ENCODE measurements at regions of chr7 and their contacts with region 1.

Region 1: GRCh38 chr7:100101016-100101862 is at the starts of genes AP4M1 and MCM7:
- DNase-seq: peak; percentile 94 to 98
- H3K4me3 ChIP-seq: peak within 1 kb of the TSS; percentile 76 to 97 (median 84)
- H3K27ac ChIP-seq: peak within 1 kb of the TSS; percentile 98
- H3K4me1 ChIP-seq: peaks cover 0 to 8% (median 3%) of the 10 kb centered on the region in 4 experiments; a peak in 3 of 7 replicates
- H3K27me3 ChIP-seq: no peaks in the 10 kb centered on the region
- CTCF ChIP-seq: no peak; a peak in 1 of 4 replicates
- EP300 ChIP-seq: no peak
- POLR2A ChIP-seq: peak in 1 of 2 experiments; percentile 77; a peak in 2 of 3 replicates
- RAD21 ChIP-seq: no peak
- total RNA-seq, gene AP4M1: 15.2 and 15.8 TPM in 2 replicates
- total RNA-seq, gene MCM7: 339 and 344 TPM in 2 replicates

Region 2: DNA sequence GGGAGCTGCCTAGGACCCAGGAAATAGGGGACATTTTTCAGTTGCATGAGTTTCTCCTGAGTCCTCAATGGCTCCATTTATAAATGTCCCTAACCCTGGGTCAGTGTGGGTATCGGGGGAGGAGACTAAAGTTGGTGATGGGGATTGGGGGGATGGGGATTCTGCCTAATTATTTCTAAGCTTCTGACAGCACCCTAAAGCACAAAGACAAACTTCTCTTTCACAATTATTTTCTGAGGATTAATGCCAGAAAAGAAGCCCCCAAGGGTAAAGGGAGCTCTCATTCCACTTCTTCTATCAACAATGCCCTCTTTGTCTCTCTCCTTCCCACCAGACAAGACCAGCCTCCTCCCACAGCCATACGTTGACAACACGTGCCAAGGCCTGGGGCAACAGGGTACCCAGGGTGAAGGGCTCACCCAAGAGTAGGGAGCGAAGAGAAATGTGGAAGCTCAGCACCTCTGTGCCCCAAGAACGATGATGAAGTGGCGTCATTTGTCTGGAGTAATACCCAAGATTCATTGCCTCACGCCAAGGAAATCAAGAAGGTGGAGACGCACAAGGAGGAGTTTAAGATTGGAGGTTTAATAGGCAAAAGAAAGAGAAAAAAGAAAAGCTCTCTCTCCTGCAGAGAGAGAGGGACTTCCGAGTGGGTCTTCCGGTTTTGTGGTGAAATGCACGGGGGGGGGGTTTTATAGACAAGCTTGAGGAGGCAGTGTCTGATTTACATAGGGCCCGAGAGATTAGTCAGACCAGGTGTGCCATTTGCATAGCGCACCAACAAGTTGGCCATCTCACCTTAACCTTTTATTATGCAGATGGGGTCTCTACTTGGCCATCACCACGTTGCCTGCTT is 157.4 kb before region 1 on chr7:
- CTCF ChIA-PET with region 1: no interaction called
- POLR2A ChIA-PET with region 1: interaction called, 23 read pairs
- DNase-seq: peak; percentile 62 to 74
- H3K4me3 ChIP-seq: peak overlapping the region in 3 of 4 experiments; percentile 1 to 48 (median 4); a peak in 3 of 8 replicates
- H3K27ac ChIP-seq: peak overlapping the region; percentile 95
- H3K4me1 ChIP-seq: peaks cover 8 to 13% (median 11%) of the 10 kb centered on the region in 4 experiments; a peak in 5 of 7 replicates
- H3K27me3 ChIP-seq: no peaks in the 10 kb centered on the region; a peak in 1 of 7 replicates
- CTCF ChIP-seq: no peak
- EP300 ChIP-seq: peak in 1 of 2 experiments; percentile 90; a peak in 1 of 3 replicates
- POLR2A ChIP-seq: peak; percentile 51 to 59; a peak in 2 of 3 replicates
- RAD21 ChIP-seq: no peak

Region 3: DNA sequence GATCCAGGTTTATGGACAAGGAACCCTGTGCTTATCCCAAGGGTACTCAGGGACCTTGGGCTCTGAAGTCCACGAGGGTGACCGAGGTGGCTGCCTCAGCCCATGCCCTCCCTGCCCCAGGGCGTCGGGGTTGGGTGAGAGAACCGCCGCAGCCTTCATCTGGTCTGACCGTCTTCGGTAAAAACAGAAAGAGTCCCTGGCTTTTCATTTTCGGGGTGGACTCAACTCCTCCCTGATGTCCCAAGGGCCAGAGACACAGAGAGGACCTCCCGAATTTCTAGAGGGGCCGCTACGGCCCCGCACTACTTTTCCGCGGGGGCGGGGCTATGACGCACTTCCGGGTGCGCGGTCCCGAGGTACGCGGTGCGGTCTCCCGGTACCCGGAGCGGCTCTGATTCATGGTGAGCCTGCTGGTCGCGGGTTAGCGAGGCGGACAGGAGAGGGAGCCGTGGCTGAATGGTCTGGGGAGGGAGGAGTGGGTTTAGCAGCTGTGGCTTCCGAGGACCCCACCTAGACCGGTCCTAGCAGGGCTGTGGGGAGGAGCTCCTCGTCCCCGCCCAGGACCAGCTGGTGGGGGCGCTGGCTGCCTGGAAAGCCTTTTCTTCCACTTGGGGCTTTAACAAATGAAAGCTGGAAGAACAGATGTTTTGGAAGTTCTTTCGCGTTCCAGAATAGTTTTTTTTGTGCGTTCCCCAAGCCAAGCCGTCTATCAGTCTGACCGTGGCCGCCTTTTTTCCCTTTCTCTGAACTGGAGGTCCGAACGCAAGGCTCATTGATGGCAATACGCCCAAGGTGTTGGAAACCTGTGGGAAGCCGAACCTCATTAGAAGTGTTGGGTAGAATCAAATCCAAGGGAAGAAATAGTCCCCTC is 51.6 kb before region 1 on chr7 and contains the start of gene ZSCAN21:
- CTCF ChIA-PET with region 1: no interaction called
- POLR2A ChIA-PET with region 1: interaction called, 10 read pairs
- DNase-seq: peak; percentile 34 to 95
- H3K4me3 ChIP-seq: peak within 1 kb of the TSS; percentile 79 to 98 (median 86)
- H3K27ac ChIP-seq: peak within 1 kb of the TSS; percentile 86
- H3K4me1 ChIP-seq: peaks cover 0 to 3% (median 0%) of the 10 kb centered on the region in 4 experiments; a peak in 3 of 7 replicates
- H3K27me3 ChIP-seq: peaks cover 0 to 1% (median 0%) of the 10 kb centered on the region in 4 experiments; a peak in 1 of 7 replicates
- CTCF ChIP-seq: peak in 1 of 3 experiments; percentile 7; a peak in 1 of 4 replicates
- EP300 ChIP-seq: no peak
- POLR2A ChIP-seq: peak; percentile 84 to 94
- RAD21 ChIP-seq: no peak
- total RNA-seq, gene ZSCAN21: 25.4 and 26.1 TPM in 2 replicates

Region 4: DNA sequence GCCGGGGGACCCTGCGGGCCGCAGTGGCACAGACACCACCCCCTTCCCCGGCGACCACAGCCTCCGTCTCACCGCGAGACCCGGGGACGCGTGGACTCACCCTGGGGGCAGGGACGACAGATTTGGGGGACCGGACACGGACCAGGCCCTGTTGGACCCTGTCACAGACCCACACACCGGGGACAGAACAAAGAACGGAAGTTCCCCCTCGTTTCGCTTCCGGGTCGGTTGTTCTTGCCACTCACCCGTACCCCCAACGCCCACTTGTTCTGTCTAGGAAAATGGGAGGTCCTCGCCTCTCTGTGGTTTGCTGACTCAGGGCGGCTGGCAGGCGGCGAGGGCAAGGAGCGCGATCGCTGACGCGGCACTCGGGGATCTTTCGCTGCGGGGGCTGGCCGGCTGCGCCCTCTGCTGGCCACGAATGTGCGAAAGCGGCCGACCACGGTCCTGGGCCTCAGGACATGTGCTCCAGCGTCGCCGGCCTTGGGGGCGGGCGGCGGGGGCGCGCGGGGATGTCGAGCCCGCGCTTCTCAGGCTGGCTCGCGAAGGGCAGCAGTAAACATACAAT is 19.6 kb before region 1 on chr7 and contains the start of gene ZNF3:
- CTCF ChIA-PET with region 1: interaction called, 8 read pairs
- POLR2A ChIA-PET with region 1: interaction called, 722 read pairs
- DNase-seq: peak; percentile 97
- H3K4me3 ChIP-seq: peak within 1 kb of the TSS; percentile 76 to 100 (median 96)
- H3K27ac ChIP-seq: peak within 1 kb of the TSS; percentile 91
- H3K4me1 ChIP-seq: peaks cover 0 to 9% (median 4%) of the 10 kb centered on the region in 4 experiments; a peak in 3 of 7 replicates
- H3K27me3 ChIP-seq: no peaks in the 10 kb centered on the region
- CTCF ChIP-seq: peak; percentile 84 to 94 (median 85)
- EP300 ChIP-seq: peak in 1 of 2 experiments; percentile 81; a peak in 1 of 3 replicates
- POLR2A ChIP-seq: peak; percentile 77 to 95
- RAD21 ChIP-seq: peak; percentile 67 to 71
- total RNA-seq, gene ZNF3: 49.1 and 50.7 TPM in 2 replicates

Region 5: GRCh38 chr7:100126931-100127865 is 26.0 kb after region 1 on chr7 and contains the start of gene MBLAC1:
- CTCF ChIA-PET with region 1: interaction called, 55 read pairs
- POLR2A ChIA-PET with region 1: interaction called, 414 read pairs
- DNase-seq: peak in 1 of 2 experiments; percentile 94
- H3K4me3 ChIP-seq: peak within 1 kb of the TSS; percentile 84 to 90 (median 88)
- H3K27ac ChIP-seq: peak within 1 kb of the TSS; percentile 90
- H3K4me1 ChIP-seq: peaks cover 0 to 8% (median 0%) of the 10 kb centered on the region in 4 experiments; a peak in 1 of 7 replicates
- H3K27me3 ChIP-seq: peaks cover 0 to 11% (median 0%) of the 10 kb centered on the region in 4 experiments; a peak in 2 of 7 replicates
- CTCF ChIP-seq: no peak
- EP300 ChIP-seq: peak in 1 of 2 experiments; percentile 98; a peak in 2 of 3 replicates
- POLR2A ChIP-seq: peak; percentile 0 to 78
- RAD21 ChIP-seq: no peak
- total RNA-seq, gene MBLAC1: 1.7 TPM in 2 replicates

Region 6: GRCh38 chr7:100158229-100159098 is 57.2 kb after region 1 on chr7 and contains the start of gene TRAPPC14:
- CTCF ChIA-PET with region 1: interaction called, 4 read pairs
- POLR2A ChIA-PET with region 1: interaction called, 17 read pairs
- DNase-seq: peak; percentile 83 to 99
- H3K4me3 ChIP-seq: peak within 1 kb of the TSS; percentile 57 to 88 (median 80)
- H3K27ac ChIP-seq: peak within 1 kb of the TSS; percentile 24; the same call in 1 of the 2 replicates
- H3K4me1 ChIP-seq: peaks cover 0 to 15% (median 9%) of the 10 kb centered on the region in 4 experiments; a peak in 5 of 7 replicates
- H3K27me3 ChIP-seq: no peaks in the 10 kb centered on the region
- CTCF ChIP-seq: no peak
- EP300 ChIP-seq: peak in 1 of 2 experiments; percentile 48; a peak in 1 of 3 replicates
- POLR2A ChIP-seq: peak; percentile 16 to 30; a peak in 1 of 3 replicates
- RAD21 ChIP-seq: no peak
- total RNA-seq, gene TRAPPC14: 20.2 and 22.1 TPM in 2 replicates

Region 7: GRCh38 chr7:100177045-100178001 is 76.1 kb after region 1 on chr7 and contains the starts of genes GPC2 and STAG3:
- CTCF ChIA-PET with region 1: no interaction called
- POLR2A ChIA-PET with region 1: interaction called, 16 read pairs
- DNase-seq: peak; percentile 97 to 100
- H3K4me3 ChIP-seq: peak within 1 kb of the TSS; percentile 91 to 97 (median 96)
- H3K27ac ChIP-seq: no peak within 1 kb of the TSS
- H3K4me1 ChIP-seq: peaks cover 3 to 7% (median 5%) of the 10 kb centered on the region in 4 experiments; a peak in 6 of 7 replicates
- H3K27me3 ChIP-seq: peaks cover 0 to 13% (median 9%) of the 10 kb centered on the region in 4 experiments; a peak in 6 of 7 replicates
- CTCF ChIP-seq: no peak
- EP300 ChIP-seq: no peak
- POLR2A ChIP-seq: peak in 1 of 2 experiments; percentile 75; a peak in 2 of 3 replicates
- RAD21 ChIP-seq: no peak
- total RNA-seq, gene GPC2: 44.8 and 46.8 TPM in 2 replicates
- total RNA-seq, gene STAG3: 3.3 and 3.8 TPM in 2 replicates